Mammary epithelial cell (primary cell): ENCODE measurements at regions of chr20 and their contacts with region 1.

Region 1: GRCh38 chr20:14963262-14963663 is 625.9 kb upstream of the FLRT3 start:
- DNase-seq: peak; percentile 88
- H3K4me3 ChIP-seq: peak overlapping the region in 2 of 3 experiments; percentile 3 to 36
- H3K27ac ChIP-seq: peak overlapping the region; percentile 85
- H3K4me1 ChIP-seq: peaks cover 21% of the 10 kb centered on the region
- H3K27me3 ChIP-seq: no peaks in the 10 kb centered on the region
- CTCF ChIP-seq: no peak

Region 2: DNA sequence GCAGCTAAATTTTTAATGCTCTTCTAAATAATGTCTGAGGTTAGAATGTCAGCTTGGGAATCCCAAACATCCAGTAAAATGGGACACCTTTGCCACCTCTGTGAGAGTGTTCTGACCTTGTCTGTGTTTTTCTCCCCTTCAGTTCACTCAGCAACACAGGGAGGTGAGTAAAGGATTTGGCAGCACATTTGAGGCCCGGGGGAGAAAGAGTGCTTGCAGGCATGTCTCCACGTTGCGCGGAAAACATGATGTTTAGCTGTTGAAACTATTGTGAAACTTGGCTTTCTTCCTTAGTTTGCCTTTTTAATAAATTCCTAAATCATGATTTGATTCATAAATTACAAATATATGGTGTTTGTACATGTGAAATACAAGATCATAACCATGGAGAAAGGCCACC is 82.0 kb after region 1 on chr20:
- CTCF ChIA-PET with region 1: no interaction called
- dilution Hi-C with region 1: loop called (anchors 5 kb)
- in situ Hi-C with region 1: no loop called
- intact Hi-C with region 1: no loop called
- DNase-seq: peak; percentile 65
- H3K4me3 ChIP-seq: no peak overlapping the region
- H3K27ac ChIP-seq: peak overlapping the region; percentile 59
- H3K4me1 ChIP-seq: peaks cover 13% of the 10 kb centered on the region
- H3K27me3 ChIP-seq: no peaks in the 10 kb centered on the region
- CTCF ChIP-seq: no peak

Region 3: GRCh38 chr20:15220778-15221565 is 257.7 kb after region 1 on chr20:
- CTCF ChIA-PET with region 1: no interaction called
- dilution Hi-C with region 1: no loop called
- in situ Hi-C with region 1: no loop called
- intact Hi-C with region 1: loop called (anchors 1 kb)
- DNase-seq: peak; percentile 71
- H3K4me3 ChIP-seq: no peak overlapping the region
- H3K27ac ChIP-seq: peak overlapping the region; percentile 79
- H3K4me1 ChIP-seq: peaks cover 25% of the 10 kb centered on the region
- H3K27me3 ChIP-seq: no peaks in the 10 kb centered on the region
- CTCF ChIP-seq: no peak